ENCODE measurements at regions of chr5 and their contacts with region 1.

Region 1: GRCh38 chr5:94174748-94175411 is 433.5 kb upstream of the POU5F2 start:
- DNase-seq: peak; percentile 69
- ATAC-seq: peak; percentile 79
- H3K4me3 ChIP-seq: no peak overlapping the region
- H3K27ac ChIP-seq: peak overlapping the region; percentile 37; the same call in 1 of the 2 replicates
- H3K4me1 ChIP-seq: peaks cover 3% of the 10 kb centered on the region; the same call in 1 of the 2 replicates
- H3K27me3 ChIP-seq: no peaks in the 10 kb centered on the region
- CTCF ChIP-seq: no peak
- POLR2A ChIP-seq: no peak
- RAD21 ChIP-seq: no peak

Region 2: GRCh38 chr5:94618493-94619328 is 443.8 kb after region 1 on chr5 and contains the starts of genes KIAA0825 and SLF1:
- CTCF ChIA-PET with region 1: no interaction called
- POLR2A ChIA-PET with region 1: no interaction called
- dilution Hi-C with region 1: no loop called
- in situ Hi-C with region 1: no loop called
- intact Hi-C with region 1: loop called (anchors 10 kb)
- DNase-seq: peak; percentile 84
- ATAC-seq: peak; percentile 90
- H3K4me3 ChIP-seq: peak within 1 kb of the TSS; percentile 95
- H3K27ac ChIP-seq: peak within 1 kb of the TSS; percentile 64
- H3K4me1 ChIP-seq: no peaks in the 10 kb centered on the region
- H3K27me3 ChIP-seq: no peaks in the 10 kb centered on the region
- CTCF ChIP-seq: no peak; the same call in 1 of the 2 replicates
- POLR2A ChIP-seq: no peak
- RAD21 ChIP-seq: no peak
- total RNA-seq, gene KIAA0825: 1.8 and 3.9 TPM in 2 replicates
- total RNA-seq, gene SLF1: 3.4 and 7.5 TPM in 2 replicates

Measured in IMR-90 (cell line).